Activated T-helper 1 cell treated with anti-CD3 and anti-CD28 coated beads, Interleukin-12 subunit alpha, Interleukin-12 subunit beta, Interleukin-2, Interleukin-4 antibody, amounts not matched to agents 30 ng/mL and 10 ng/mL and 1 ng/mL, durations not matched to agents 14 hours and 24 hours and 36 hours (primary cell): ENCODE measurements at regions of chr1 and their contacts with region 1.

Region 1: GRCh38 chr1:26500488-26501175 is 28.4 kb downstream of the HMGN2 start:
- DNase-seq: peak; percentile 84
- H3K4me3 Mint-ChIP-seq: peak overlapping the region; percentile 90
- H3K27ac Mint-ChIP-seq: peak overlapping the region; percentile 91
- H3K4me1 Mint-ChIP-seq: peaks cover 18% of the 10 kb centered on the region
- H3K27me3 Mint-ChIP-seq: no peaks in the 10 kb centered on the region

Region 2: DNA sequence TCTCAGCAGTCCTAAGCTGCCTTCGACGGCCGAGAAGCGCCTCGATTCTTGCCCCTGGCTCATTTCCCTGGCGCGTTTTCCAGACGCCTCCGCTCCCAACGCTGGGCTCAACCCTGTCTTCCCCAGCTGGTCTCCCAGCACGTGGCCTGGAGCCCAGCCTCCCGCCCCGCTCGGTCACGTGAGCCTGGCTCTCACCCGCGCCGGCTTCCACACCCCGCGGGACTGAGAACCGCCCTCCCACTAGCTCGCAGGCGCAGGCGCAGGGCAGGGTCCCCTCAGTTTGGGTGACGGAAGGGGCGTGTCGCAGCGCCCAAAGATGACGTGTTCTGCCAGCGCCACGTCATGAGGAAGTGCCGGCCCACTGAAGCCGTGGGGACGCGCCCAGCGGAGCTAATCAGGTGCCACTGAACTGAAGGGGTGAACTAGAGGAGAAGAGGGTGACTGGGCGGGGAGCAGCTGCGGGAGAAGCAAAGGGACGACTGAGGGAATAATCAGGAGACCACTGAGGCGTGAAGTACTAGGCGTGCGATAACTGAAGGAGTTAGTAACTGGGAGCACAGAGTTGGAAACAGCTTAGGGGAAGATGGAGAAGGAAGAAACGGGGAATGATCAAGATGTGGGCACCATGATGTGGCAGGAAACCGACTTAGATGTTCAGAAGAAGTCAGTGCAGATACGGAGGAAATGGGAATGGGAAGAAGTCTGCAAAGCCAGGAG is 68.5 kb before region 1 on chr1 and contains the start of gene DHDDS:
- intact Hi-C with region 1: loop called (anchors 1 kb)
- DNase-seq: peak; percentile 98
- H3K4me3 Mint-ChIP-seq: peak within 1 kb of the TSS; percentile 94
- H3K27ac Mint-ChIP-seq: peak within 1 kb of the TSS; percentile 89
- H3K4me1 Mint-ChIP-seq: peaks cover 18% of the 10 kb centered on the region
- H3K27me3 Mint-ChIP-seq: peaks cover 12% of the 10 kb centered on the region
- total RNA-seq, gene DHDDS: 58.4 and 60.9 TPM in 2 replicates

Region 3: DNA sequence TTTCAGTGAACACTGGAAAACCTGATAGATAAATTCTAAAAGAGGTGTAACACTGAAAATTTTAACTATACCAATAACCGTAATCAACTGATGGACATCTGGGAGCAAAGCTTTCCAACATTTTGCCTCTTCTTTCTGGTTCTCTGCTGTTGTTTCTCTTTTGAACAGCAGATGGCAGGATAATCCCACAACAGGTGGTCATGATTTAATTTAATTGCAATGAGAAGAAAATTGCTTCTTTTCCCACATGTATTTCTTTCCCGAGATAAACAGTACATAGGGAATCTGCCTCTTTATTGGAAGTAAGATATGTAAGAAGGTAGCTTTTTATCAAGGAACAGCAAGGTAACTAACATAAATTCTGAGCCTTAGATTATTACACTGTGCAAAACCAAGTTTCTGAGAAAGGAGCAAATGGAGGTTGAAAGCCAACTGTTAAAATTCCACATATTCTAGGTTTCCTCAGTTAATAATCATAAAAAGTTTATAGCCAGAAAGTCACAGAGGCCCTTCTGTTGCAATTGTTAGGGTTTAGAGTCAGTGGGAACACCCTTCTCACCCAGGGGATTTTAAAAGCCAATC is 101.8 kb after region 1 on chr1:
- intact Hi-C with region 1: loop called (anchors 1 kb)
- DNase-seq: peak; percentile 36
- H3K4me3 Mint-ChIP-seq: no peak overlapping the region
- H3K27ac Mint-ChIP-seq: no peak overlapping the region
- H3K4me1 Mint-ChIP-seq: peaks cover 15% of the 10 kb centered on the region
- H3K27me3 Mint-ChIP-seq: peaks cover 4% of the 10 kb centered on the region

Region 4: GRCh38 chr1:26744075-26744959 is 243.7 kb after region 1 on chr1:
- intact Hi-C with region 1: loop called (anchors 1 kb)
- DNase-seq: peak; percentile 84
- H3K4me3 Mint-ChIP-seq: peak overlapping the region; percentile 73
- H3K27ac Mint-ChIP-seq: peak overlapping the region; percentile 93
- H3K4me1 Mint-ChIP-seq: peaks cover 77% of the 10 kb centered on the region
- H3K27me3 Mint-ChIP-seq: no peaks in the 10 kb centered on the region

Region 5: GRCh38 chr1:26921540-26922430 is 421.2 kb after region 1 on chr1 and contains the start of gene NUDC:
- intact Hi-C with region 1: loop called (anchors 1 kb)
- DNase-seq: peak; percentile 97
- H3K4me3 Mint-ChIP-seq: peak within 1 kb of the TSS; percentile 97
- H3K27ac Mint-ChIP-seq: peak within 1 kb of the TSS; percentile 96
- H3K4me1 Mint-ChIP-seq: peaks cover 31% of the 10 kb centered on the region
- H3K27me3 Mint-ChIP-seq: peaks cover 2% of the 10 kb centered on the region
- total RNA-seq, gene NUDC: 151 and 152 TPM in 2 replicates

Region 6: DNA sequence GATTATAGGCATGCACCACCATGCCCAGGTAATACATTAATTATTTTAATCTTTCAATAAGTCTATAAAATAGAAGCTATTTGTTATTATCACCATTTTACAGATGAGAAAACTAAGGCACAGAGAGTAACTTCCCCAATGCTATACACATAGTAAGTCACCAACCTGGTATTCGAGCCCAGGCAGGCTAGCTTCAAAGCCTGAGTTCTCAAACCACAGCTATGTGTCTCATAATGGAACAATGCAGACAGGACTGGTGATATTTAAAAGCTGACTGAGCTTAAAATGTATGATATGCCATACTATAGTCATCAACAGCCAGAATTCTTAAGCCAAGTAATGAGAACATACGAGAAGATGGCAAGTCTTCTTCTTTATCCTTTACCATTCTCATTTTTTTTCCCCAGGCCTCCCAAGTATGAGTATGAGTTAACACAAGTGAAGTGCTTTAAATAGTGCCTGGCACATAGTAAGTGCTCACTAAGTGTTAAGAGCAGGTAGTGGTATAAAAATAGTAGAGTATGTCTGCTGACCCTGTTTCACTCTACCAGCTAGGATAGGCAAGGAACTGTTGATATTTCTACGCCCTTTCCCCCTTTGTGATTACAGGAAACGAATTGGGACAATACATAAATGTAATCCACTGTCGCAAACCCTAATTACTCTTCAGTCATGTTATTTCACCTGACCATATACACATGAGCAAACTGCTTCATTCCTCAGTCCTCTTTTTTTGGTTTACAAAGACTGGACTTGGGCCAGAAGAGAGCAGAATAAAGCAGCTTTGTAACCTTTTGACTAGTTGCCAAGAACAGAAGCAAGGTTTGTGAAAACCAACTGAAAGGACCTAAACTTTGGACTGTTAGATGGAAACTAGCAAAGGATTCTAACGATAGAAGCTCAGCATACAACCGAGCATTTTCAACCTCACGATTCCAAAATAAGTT is 1578.3 kb after region 1 on chr1:
- intact Hi-C with region 1: no loop called
- DNase-seq: no peak
- H3K4me3 Mint-ChIP-seq: no peak overlapping the region
- H3K27ac Mint-ChIP-seq: no peak overlapping the region
- H3K4me1 Mint-ChIP-seq: peaks cover 16% of the 10 kb centered on the region
- H3K27me3 Mint-ChIP-seq: no peaks in the 10 kb centered on the region